Body of pancreas (tissue), 4 donors: ENCODE measurements at regions of chr6 and their contacts with region 1.

Region 1: DNA sequence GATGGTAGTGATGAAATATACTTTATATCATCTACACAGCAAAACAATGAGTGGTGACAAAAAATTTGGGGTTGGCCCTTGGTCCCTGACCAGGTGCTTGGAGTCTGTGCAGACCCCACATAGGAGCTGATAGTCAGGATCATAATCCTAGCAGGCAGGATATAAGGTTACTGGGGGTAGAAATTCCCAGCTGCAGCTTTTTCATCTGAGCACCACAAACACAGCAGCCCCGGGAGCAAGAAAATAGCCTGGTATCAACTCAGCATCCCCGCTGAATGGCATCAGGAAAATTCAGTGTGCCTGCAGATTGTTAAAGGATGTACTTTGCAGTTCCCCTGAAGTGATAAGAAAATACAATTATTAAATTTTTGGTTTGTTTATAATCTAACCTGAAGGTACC is 27.8 kb upstream of the RPL7L1 start:
- DNase-seq: no peak
- ATAC-seq: no peak
- H3K4me3 ChIP-seq: no peak overlapping the region
- H3K27ac ChIP-seq: no peak overlapping the region
- H3K4me1 ChIP-seq: peaks cover 5% of the 10 kb centered on the region
- H3K27me3 ChIP-seq: no peaks in the 10 kb centered on the region
- CTCF ChIP-seq: no peak
- POLR2A ChIP-seq: no peak

Region 2: DNA sequence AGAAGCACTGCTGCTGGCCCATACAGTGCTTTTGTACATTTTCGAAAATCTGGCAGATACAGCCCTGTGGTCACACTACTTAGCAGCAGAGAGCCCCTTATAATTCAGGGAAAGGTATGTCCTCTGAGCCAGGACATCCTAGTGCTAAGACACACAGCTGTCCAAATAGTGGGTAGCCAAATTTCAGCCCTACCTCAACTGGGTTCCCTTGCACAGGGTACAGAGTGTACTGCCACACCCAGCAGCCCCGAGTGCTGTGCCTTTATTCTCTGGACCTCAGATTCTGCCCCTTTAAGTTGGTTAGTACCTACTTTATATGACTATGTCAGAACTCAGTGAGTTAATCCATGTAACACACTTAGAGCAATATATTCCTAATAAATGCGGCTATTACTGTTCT is 176.8 kb before region 1 on chr6:
- intact Hi-C with region 1: loop called (anchors 10 kb)
- DNase-seq: no peak
- ATAC-seq: no peak
- H3K4me3 ChIP-seq: no peak overlapping the region
- H3K27ac ChIP-seq: no peak overlapping the region
- H3K4me1 ChIP-seq: no peaks in the 10 kb centered on the region
- H3K27me3 ChIP-seq: no peaks in the 10 kb centered on the region
- CTCF ChIP-seq: no peak
- POLR2A ChIP-seq: no peak

Region 3: DNA sequence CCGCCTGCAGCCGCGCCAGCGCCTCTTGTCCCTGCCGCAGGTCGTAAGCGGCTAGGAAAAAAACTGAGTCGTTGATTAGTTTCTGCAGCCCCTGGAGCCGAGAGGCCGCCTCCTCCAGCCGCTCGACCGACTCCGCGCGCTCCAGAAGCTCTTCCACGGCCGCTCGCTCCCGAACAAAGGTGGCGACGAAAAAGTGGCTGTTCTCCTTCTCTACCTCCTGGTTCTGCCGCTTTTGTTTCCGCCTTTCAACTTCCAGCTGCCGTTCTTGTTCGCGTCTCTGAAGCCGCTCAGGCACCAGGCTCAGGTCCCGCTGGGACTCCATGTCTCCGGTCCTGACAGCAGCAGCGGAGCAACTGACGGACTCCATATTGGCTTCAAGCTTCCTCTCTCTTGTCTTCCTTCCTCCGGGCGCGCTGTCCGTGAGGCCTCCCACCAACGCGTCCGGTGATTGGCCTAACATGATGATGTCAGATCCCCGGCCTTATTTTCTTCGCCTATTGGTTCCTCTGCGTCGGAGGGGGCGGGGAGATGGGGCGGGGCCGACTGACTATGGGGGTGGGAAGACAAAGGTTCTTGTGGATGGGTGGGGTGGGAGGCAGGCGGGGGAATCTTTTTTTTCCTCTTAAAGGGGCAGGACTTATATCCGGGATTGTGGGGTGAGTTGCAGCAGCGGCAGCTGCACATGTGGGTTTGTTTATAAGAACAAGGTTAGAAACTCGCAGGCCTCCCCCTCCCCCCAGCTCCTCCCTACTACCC is 105.7 kb before region 1 on chr6 and contains the start of gene TBCC:
- intact Hi-C with region 1: no loop called
- DNase-seq: peak; percentile 95 to 98 (median 97)
- ATAC-seq: peak; percentile 94
- H3K4me3 ChIP-seq: peak within 1 kb of the TSS; percentile 76 to 93
- H3K27ac ChIP-seq: peak within 1 kb of the TSS; percentile 81 to 99 (median 91)
- H3K4me1 ChIP-seq: peaks cover 40% of the 10 kb centered on the region
- H3K27me3 ChIP-seq: no peaks in the 10 kb centered on the region
- CTCF ChIP-seq: no peak
- POLR2A ChIP-seq: peak; percentile 93 to 99 (median 99)
- total RNA-seq, gene TBCC: 14.5 to 25.4 TPM

Region 4: DNA sequence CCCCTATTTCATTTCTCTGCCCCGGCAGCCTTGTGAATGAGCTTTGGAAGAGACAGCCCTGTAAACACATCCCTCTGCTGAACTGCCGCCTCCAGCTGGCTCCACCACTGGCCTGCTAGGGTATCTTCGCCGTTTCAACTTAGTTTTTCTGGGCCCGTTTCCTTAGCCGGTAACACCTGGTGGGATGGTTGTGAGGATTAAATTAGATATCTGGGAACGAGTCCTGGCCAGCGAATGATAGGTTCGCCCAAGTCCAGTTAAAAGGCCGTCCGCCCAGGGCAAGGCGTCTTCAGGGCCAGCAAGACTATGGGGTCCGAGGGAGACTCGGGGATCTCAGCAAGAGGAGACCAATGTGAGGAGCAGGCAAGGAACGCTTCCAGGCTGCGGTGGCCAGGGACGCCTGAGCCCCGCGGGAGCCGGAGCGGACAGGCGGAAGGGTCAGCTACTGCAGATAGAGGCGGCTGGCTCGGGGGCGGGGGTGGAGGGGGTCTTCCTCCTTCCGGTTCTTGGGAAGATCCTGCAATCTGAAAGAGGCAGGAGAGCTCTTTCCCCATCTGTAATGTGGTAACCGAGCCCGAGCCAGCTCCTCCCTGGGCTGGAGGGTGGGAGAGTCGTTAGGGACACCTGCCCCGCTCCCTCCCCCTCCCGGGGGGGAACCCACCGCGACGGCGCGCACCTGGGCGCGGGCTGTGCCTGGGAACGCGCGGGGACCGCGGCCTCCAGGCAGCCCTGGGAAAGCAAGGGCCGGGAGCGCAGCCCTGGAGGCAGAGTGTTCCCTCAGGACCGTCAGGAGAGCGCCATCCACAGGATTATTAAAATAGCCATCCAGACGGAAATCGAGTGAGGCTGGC is 59.8 kb after region 1 on chr6:
- intact Hi-C with region 1: no loop called
- DNase-seq: peak in 1 of 4 donors; percentile 31
- ATAC-seq: peak; percentile 45
- H3K4me3 ChIP-seq: no peak overlapping the region
- H3K27ac ChIP-seq: peak overlapping the region in 2 of 4 donors; percentile 23 to 38
- H3K4me1 ChIP-seq: peaks cover 9% of the 10 kb centered on the region
- H3K27me3 ChIP-seq: no peaks in the 10 kb centered on the region
- CTCF ChIP-seq: no peak
- POLR2A ChIP-seq: no peak